HepG2 (cell line): ENCODE measurements at regions of chr16 and their contacts with region 1.

Region 1: GRCh38 chr16:57795431-57795878 is 6.8 kb downstream of the KIFC3 start:
- DNase-seq: peak; percentile 73
- ATAC-seq: peak; percentile 3; the same call in 1 of the 3 replicates
- H3K4me3 ChIP-seq: no peak overlapping the region; a peak in 1 of 6 replicates
- H3K27ac ChIP-seq: no peak overlapping the region
- H3K4me1 ChIP-seq: peaks cover 67% of the 10 kb centered on the region
- H3K27me3 ChIP-seq: no peaks in the 10 kb centered on the region
- CTCF ChIP-seq: peak; percentile 73
- EP300 ChIP-seq: no peak
- POLR2A ChIP-seq: no peak
- RAD21 ChIP-seq: peak; percentile 76

Region 2: GRCh38 chr16:57810197-57811031 is 15.0 kb after region 1 on chr16:
- CTCF ChIA-PET with region 1: no interaction called
- POLR2A ChIA-PET with region 1: interaction called, 25 read pairs
- in situ Hi-C with region 1: no loop called
- intact Hi-C with region 1: no loop called
- DNase-seq: peak; percentile 92
- ATAC-seq: peak; percentile 93
- H3K4me3 ChIP-seq: peak overlapping the region in 1 of 3 experiments; percentile 41; a peak in 2 of 6 replicates
- H3K27ac ChIP-seq: peak overlapping the region; percentile 63
- H3K4me1 ChIP-seq: peaks cover 71% of the 10 kb centered on the region
- H3K27me3 ChIP-seq: no peaks in the 10 kb centered on the region
- CTCF ChIP-seq: peak; percentile 26; the same call in 1 of the 2 replicates
- EP300 ChIP-seq: peak in 1 of 2 experiments; percentile 80; a peak in 2 of 4 replicates
- POLR2A ChIP-seq: peak; percentile 40 to 85; a peak in 3 of 4 replicates
- RAD21 ChIP-seq: no peak

Region 3: DNA sequence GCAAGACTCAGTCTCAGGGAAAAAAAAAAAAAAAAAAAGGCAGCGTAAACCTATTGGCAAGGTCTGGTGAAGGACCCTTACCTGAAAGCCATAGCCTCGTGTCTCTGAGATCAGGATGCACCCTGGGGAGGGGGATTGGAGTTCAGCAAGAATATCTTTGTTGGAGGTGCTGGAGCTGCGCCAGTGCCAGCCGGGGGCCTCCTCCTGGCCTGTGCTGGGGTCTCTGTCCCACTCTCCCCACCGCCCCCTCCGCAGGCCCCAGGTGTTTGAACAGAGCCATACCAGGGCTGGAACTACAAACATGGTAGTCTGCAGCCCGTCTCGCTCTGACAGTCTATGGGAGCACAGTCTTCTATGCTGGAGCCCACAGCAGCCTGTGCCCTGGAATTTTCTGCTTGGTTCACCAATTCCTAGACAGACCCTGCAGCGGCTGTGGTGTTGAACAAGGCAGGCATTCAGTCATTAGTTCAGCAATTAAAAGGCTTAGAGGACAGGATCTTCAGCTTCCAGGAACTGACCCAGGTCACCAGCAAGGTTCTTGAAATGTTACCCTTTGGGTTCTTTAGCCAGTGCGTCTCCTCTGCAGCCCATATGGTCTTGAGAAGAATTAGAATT is 49.1 kb after region 1 on chr16:
- CTCF ChIA-PET with region 1: no interaction called
- POLR2A ChIA-PET with region 1: interaction called, 4 read pairs
- in situ Hi-C with region 1: no loop called
- intact Hi-C with region 1: loop called (anchors 5 kb)
- DNase-seq: no peak
- ATAC-seq: peak; percentile 17
- H3K4me3 ChIP-seq: no peak overlapping the region
- H3K27ac ChIP-seq: no peak overlapping the region
- H3K4me1 ChIP-seq: peaks cover 55% of the 10 kb centered on the region
- H3K27me3 ChIP-seq: no peaks in the 10 kb centered on the region
- CTCF ChIP-seq: no peak
- EP300 ChIP-seq: no peak
- POLR2A ChIP-seq: no peak
- RAD21 ChIP-seq: no peak

Region 4: DNA sequence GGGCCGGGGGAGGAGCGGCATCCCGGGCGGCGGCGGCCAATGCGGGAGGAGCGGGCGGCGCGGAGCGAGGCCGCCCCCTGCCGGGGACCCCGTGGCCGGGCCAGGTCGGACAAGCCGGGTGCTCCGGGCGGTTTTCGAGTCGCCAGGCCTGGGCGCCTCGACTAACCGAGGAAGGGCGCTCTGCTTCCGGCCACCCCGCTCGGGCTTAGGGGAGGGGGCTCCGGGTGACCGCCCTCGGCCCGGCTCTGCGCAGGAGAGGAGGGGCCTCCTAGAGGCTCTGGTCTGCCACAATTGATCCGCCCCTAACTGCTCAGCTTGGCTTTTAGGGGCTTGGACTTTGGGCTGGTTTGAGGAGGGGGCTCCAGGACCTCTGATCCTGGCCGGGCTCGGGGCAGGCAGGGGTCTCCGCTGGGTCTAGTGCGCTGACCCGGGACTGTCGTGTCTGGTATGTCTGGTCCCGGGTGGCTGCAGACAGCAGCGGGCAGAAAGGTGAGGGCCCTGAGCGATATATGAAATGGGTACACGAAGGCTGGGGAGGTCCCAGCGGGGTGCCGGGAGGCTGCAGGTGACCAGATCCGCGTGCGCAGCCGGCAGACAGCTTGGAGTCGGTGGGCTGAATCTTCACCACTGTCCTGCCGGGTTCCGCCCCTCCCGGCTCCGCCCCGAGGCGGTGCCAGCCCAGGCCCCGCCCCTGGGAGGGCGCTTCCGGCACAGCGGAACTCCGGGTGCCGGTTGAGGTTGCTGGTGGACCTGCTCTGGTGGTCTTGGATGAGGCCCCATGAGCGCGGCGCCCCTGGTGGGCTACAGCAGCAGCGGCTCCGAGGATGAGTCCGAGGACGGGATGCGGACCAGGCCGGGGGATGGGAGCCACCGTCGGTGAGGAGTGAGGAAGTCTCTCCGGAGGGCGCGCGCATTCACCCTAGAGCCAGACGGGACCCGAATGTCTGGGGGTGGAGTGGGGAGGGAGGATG is 205.5 kb after region 1 on chr16 and contains the start of gene USB1:
- CTCF ChIA-PET with region 1: no interaction called
- POLR2A ChIA-PET with region 1: interaction called, 4 read pairs
- in situ Hi-C with region 1: no loop called
- intact Hi-C with region 1: loop called (anchors 5 kb)
- DNase-seq: peak; percentile 88
- ATAC-seq: peak; percentile 92
- H3K4me3 ChIP-seq: peak within 1 kb of the TSS; percentile 85 to 98 (median 93)
- H3K27ac ChIP-seq: peak within 1 kb of the TSS; percentile 81
- H3K4me1 ChIP-seq: peaks cover 34% of the 10 kb centered on the region
- H3K27me3 ChIP-seq: no peaks in the 10 kb centered on the region; a peak in 1 of 5 replicates
- CTCF ChIP-seq: peak; percentile 72
- EP300 ChIP-seq: 0 out of 4 replicates have a peak, but pooled peaks of 1 of the 2 experiments have one; percentile 9
- POLR2A ChIP-seq: peak; percentile 68 to 91
- RAD21 ChIP-seq: peak; percentile 85
- total RNA-seq, gene USB1: 16.7 and 33.5 TPM in 2 replicates